ENCODE measurements at regions of chr12 and their contacts with region 1.

Region 1: GRCh38 chr12:10959804-10960203 is 20.7 kb upstream of the TAS2R14 start:
- DNase-seq: no peak
- ATAC-seq: peak in 2 of 8 donors; percentile 59 to 74
- H3K4me3 ChIP-seq: no peak overlapping the region
- H3K27ac ChIP-seq: no peak overlapping the region
- H3K4me1 ChIP-seq: no peaks in the 10 kb centered on the region
- H3K27me3 ChIP-seq: no peaks in the 10 kb centered on the region
- CTCF ChIP-seq: peak in 5 of 9 donors; percentile 15 to 38 (median 24)

Region 2: GRCh38 chr12:10867381-10867780 is 92.4 kb before region 1 on chr12:
- intact Hi-C with region 1: no loop called
- DNase-seq: no peak
- ATAC-seq: no peak
- H3K4me3 ChIP-seq: no peak overlapping the region
- H3K27ac ChIP-seq: no peak overlapping the region
- H3K4me1 ChIP-seq: no peaks in the 10 kb centered on the region
- H3K27me3 ChIP-seq: no peaks in the 10 kb centered on the region
- CTCF ChIP-seq: peak in 3 of 9 donors; percentile 13 to 15 (median 15)

Region 3: DNA sequence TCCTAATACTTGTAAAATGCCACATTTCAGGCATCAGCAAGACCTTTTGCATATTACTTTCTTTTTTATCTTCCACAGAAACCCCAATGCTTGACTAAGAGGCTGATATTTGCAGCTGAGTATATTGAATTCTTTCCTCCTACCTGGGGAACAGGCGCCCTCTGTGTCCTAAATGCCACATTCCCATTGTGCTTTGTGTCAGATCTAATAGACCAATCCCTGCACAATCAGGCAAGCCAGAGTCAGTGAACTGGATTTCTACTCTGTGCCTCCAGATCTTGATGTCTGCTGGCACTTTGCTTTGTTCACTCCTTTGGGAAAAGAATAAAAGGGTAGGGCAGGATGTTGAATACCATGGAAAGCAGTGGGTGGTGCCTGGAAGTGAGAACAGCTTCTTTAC is 249.3 kb after region 1 on chr12:
- intact Hi-C with region 1: loop called in 2 of 10 experiments (anchors 5 to 10 kb)
- DNase-seq: no peak
- ATAC-seq: no peak
- H3K4me3 ChIP-seq: no peak overlapping the region
- H3K27ac ChIP-seq: no peak overlapping the region
- H3K4me1 ChIP-seq: no peaks in the 10 kb centered on the region
- H3K27me3 ChIP-seq: no peaks in the 10 kb centered on the region
- CTCF ChIP-seq: no peak